Right cardiac atrium (tissue), 5 donors: ENCODE measurements at regions of chr2 and their contacts with region 1.

Region 1: DNA sequence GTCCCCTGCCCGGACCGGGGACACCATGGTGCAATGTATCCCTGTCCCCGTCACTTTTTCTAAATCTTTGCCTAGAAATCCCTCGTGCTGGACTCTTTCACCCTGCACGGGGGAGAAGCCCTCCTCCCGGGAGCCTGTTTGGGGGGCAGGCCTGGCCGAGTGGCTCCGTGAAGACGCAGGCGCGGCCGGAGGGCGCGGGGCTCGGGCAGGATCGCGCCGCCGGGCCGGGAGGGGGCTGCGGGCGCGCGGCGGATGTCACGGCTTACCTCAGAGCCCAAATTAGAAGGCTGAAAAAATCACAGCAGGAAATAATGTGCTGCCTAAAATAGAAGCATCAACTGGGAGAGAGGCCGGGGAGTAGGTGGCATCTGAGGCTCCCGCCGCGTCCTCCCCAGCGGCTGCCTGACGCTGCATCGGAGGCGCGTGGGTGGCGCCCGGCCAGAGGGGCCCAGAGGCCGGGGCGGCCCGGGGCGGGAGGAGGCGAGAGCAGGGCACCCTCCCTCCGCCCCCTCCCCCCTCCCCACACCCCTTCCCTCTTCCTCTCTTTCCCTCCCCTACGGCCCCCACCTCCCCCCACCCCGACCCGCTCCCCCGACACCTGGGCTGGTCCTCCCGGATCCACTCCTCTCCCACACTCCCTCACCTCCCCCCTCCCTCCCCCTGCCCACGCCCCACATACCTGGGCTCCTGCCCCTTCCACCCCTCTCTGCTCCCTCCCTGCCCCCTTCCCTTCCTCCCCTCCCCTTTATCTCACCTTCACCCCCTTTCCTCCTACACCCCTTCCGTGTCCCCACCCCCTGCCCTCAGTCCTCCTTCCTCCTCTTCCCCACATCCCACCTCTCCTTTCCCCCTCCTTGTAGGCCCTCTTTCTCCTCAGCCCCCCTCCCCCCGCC is 51.9 kb downstream of the SLC4A1AP start:
- DNase-seq: peak; percentile 75 to 91 (median 89)
- ATAC-seq: peak; percentile 87 to 88
- H3K4me3 ChIP-seq: peak overlapping the region; percentile 23
- H3K27ac ChIP-seq: peak overlapping the region; percentile 93
- H3K4me1 ChIP-seq: peaks cover 2% of the 10 kb centered on the region
- H3K27me3 ChIP-seq: no peaks in the 10 kb centered on the region

Region 2: GRCh38 chr2:27809761-27810241 is 94.2 kb after region 1 on chr2:
- intact Hi-C with region 1: loop called in 1 of 4 experiments (anchors 10 kb)
- DNase-seq: no peak
- ATAC-seq: no peak
- H3K4me3 ChIP-seq: no peak overlapping the region
- H3K27ac ChIP-seq: no peak overlapping the region
- H3K4me1 ChIP-seq: no peaks in the 10 kb centered on the region
- H3K27me3 ChIP-seq: no peaks in the 10 kb centered on the region

Region 3: DNA sequence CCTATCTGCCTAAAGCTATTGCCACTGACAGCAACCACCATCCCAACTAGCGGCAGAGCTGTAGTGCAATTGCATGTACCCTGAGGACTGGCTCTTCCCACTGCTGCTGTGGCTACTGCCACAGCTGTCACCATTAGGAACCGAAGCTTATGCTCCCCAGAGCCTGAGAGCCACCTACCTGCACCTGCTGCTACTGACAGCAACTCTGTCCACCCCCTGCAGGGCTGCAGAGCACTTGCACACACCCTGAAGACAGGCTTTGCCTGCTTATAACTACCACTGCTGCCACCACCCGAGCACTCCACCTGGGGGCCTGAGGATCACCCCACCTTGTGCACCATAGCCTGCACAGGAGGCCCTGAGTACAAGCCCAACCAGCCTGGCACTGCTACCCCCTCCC is 459.5 kb after region 1 on chr2:
- intact Hi-C with region 1: no loop called
- DNase-seq: no peak
- ATAC-seq: peak in 1 of 2 donors; percentile 11
- H3K4me3 ChIP-seq: no peak overlapping the region
- H3K27ac ChIP-seq: no peak overlapping the region
- H3K4me1 ChIP-seq: no peaks in the 10 kb centered on the region
- H3K27me3 ChIP-seq: no peaks in the 10 kb centered on the region